ENCODE measurements at regions of chr5 and their contacts with region 1.

Region 1: GRCh38 chr5:181243512-181244343 is at the start of gene RACK1:
- DNase-seq: peak; percentile 83 to 94
- ATAC-seq: peak; percentile 74 to 83 (median 76)
- H3K4me3 ChIP-seq: peak within 1 kb of the TSS; percentile 66
- H3K4me3 Mint-ChIP-seq: peak within 1 kb of the TSS; percentile 98
- H3K27ac ChIP-seq: peak within 1 kb of the TSS; percentile 65
- H3K27ac Mint-ChIP-seq: peak within 1 kb of the TSS; percentile 98 to 99
- H3K4me1 ChIP-seq: peaks cover 61% of the 10 kb centered on the region
- H3K4me1 Mint-ChIP-seq: peaks cover 62 to 81% of the 10 kb centered on the region in 2 donors
- H3K27me3 ChIP-seq: no peaks in the 10 kb centered on the region
- H3K27me3 Mint-ChIP-seq: no peaks in the 10 kb centered on the region
- CTCF ChIP-seq: no peak
- total RNA-seq, gene RACK1: 1,089 to 1,233 (median 1,138) TPM

Region 2: DNA sequence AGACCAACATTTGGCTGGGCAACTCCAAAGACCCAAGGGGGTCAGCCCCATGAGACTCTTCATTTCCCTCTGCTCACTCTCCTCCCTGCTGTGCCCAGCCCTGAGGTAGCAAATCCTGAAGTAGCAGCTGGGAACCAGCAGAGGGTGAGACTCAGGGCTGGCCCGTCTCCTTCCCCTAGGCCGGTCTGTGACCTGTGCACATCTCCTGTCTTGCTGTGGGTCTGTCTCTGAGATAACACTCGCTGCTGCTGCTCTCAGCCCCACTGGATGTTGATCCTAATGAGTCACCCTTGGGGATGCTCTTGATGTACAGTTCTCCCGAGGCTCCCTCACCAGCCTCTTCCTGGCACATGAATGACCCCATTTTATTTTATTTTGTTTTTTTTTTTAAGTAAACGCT is 105.5 kb before region 1 on chr5:
- intact Hi-C with region 1: no loop called
- DNase-seq: no peak
- ATAC-seq: no peak
- H3K4me3 ChIP-seq: no peak overlapping the region
- H3K4me3 Mint-ChIP-seq: no peak overlapping the region
- H3K27ac ChIP-seq: no peak overlapping the region
- H3K27ac Mint-ChIP-seq: no peak overlapping the region
- H3K4me1 ChIP-seq: no peaks in the 10 kb centered on the region
- H3K4me1 Mint-ChIP-seq: no peaks in the 10 kb centered on the region
- H3K27me3 ChIP-seq: peaks cover 3% of the 10 kb centered on the region
- H3K27me3 Mint-ChIP-seq: peaks cover 17 to 41% of the 10 kb centered on the region in 2 donors
- CTCF ChIP-seq: no peak

Region 3: DNA sequence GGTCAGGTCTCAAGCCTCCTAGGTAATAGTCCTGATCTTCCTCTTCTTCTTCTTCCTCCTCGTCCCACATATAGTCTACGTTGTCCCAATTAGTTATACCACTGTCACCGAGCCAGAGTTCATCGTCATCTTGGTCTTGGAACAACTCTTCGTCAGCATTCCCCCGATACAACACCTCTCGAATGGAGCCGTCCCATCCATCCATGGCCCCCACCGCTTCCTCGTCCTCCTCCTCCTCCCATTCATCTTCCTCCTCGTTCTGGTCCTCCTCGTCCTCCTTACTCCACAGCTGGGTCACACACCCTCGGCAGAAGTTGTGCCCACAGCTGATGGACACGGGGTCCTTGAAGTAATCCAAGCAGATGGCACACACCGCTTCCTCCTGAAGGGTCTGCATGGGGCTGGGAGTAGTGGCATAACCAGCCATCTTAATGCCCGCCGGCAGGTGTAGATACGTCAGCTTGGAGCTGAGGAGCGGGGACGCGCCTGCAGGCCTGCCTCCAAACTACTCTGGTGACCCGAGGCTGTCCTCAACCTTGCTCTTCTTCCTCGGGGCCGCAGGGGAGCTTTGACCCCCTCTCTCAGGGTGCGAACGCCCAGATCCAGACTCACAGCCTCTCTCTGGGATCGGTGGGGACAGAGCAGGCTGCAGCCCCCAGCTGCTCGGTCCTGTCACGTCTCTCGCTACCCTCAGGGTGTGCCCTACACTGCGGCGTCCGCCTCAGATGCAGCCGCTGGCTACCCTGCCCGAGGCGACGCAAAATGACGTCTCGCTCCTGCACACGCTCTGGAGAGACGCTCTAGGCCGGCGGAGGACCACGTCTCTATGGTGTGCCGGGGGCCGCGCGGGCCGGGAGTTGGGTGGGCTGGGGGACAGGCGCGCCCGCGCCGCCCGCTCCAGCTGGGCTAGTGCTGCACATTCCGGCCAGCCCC is 16.9 kb after region 1 on chr5 and contains the start of gene TRIM52:
- intact Hi-C with region 1: loop called (anchors 1 kb)
- DNase-seq: peak; percentile 87 to 96
- ATAC-seq: peak; percentile 77 to 95 (median 83)
- H3K4me3 ChIP-seq: peak within 1 kb of the TSS; percentile 92
- H3K4me3 Mint-ChIP-seq: peak within 1 kb of the TSS; percentile 99
- H3K27ac ChIP-seq: peak within 1 kb of the TSS; percentile 98
- H3K27ac Mint-ChIP-seq: peak within 1 kb of the TSS; percentile 98 to 99
- H3K4me1 ChIP-seq: peaks cover 41% of the 10 kb centered on the region
- H3K4me1 Mint-ChIP-seq: peaks cover 46 to 57% of the 10 kb centered on the region in 2 donors
- H3K27me3 ChIP-seq: no peaks in the 10 kb centered on the region
- H3K27me3 Mint-ChIP-seq: no peaks in the 10 kb centered on the region
- CTCF ChIP-seq: no peak
- total RNA-seq, gene TRIM52: 43.4 to 60.0 (median 44.4) TPM

Region 4: GRCh38 chr5:181271081-181271480 is 27.4 kb after region 1 on chr5:
- intact Hi-C with region 1: no loop called
- DNase-seq: no peak
- ATAC-seq: no peak
- H3K4me3 ChIP-seq: no peak overlapping the region
- H3K4me3 Mint-ChIP-seq: no peak overlapping the region
- H3K27ac ChIP-seq: no peak overlapping the region
- H3K27ac Mint-ChIP-seq: no peak overlapping the region
- H3K4me1 ChIP-seq: no peaks in the 10 kb centered on the region
- H3K4me1 Mint-ChIP-seq: no peaks in the 10 kb centered on the region
- H3K27me3 ChIP-seq: no peaks in the 10 kb centered on the region
- H3K27me3 Mint-ChIP-seq: no peaks in the 10 kb centered on the region
- CTCF ChIP-seq: no peak

Region 5: DNA sequence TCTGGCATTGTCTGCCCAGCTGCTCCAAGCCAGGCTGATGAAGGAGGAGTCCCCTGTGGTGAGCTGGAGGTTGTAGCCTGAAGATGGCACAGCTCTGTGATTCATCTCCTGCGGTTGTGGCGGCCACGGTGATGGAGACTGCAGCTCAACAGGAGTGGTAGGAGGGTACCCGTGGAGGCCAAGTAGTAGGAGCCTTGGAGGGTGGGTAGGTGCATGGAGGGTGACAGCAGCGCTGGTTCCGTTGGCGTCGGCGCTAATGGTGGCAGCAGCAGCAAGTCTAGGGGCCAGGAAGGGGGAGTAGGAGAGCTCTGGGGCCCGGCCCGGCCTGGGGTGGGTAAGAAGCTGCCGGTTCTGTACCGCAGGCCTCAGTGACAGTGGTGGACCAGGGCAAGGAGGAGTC is 39.6 kb after region 1 on chr5:
- intact Hi-C with region 1: no loop called
- DNase-seq: no peak
- ATAC-seq: no peak
- H3K4me3 ChIP-seq: no peak overlapping the region
- H3K4me3 Mint-ChIP-seq: no peak overlapping the region
- H3K27ac ChIP-seq: no peak overlapping the region
- H3K27ac Mint-ChIP-seq: no peak overlapping the region
- H3K4me1 ChIP-seq: no peaks in the 10 kb centered on the region
- H3K4me1 Mint-ChIP-seq: no peaks in the 10 kb centered on the region
- H3K27me3 ChIP-seq: no peaks in the 10 kb centered on the region
- H3K27me3 Mint-ChIP-seq: no peaks in the 10 kb centered on the region
- CTCF ChIP-seq: no peak

Measured in natural killer cell (primary cell).